Activated CD4-positive, alpha-beta T cell treated with anti-CD3 and anti-CD28 coated beads, Interleukin-2, amount 10 ng/mL, durations not matched to agents 24 days and 14 days (primary cell): ENCODE measurements at regions of chr3 and their contacts with region 1.

Region 1: GRCh38 chr3:4978204-4978965 is 852 bp upstream of the BHLHE40 start:
- DNase-seq: peak; percentile 97
- H3K4me3 Mint-ChIP-seq: peak overlapping the region; percentile 96
- H3K27ac Mint-ChIP-seq: peak overlapping the region; percentile 100
- H3K4me1 Mint-ChIP-seq: peaks cover 33% of the 10 kb centered on the region
- H3K27me3 Mint-ChIP-seq: no peaks in the 10 kb centered on the region

Region 2: DNA sequence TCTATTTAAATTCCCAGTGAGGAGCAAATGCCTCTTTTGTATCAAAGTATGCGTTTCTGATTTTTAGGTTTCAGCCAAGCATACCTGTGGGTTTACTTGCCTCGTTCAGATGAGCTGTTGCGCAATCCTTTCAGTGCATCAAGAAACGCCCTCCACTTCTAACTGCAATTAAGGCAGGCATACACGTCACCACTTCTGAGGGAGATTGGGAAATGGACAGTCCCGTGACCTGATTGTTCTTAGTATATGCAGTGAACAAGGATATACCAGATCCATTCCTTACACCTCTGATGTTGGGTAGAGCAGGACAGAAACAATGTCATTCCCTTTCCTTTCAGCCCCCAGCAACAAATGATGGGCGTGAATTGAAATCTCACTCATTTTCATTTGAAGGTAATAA is 266.2 kb before region 1 on chr3:
- intact Hi-C with region 1: loop called (anchors 1 kb)
- DNase-seq: no peak
- H3K4me3 Mint-ChIP-seq: no peak overlapping the region
- H3K27ac Mint-ChIP-seq: no peak overlapping the region
- H3K4me1 Mint-ChIP-seq: peaks cover 27% of the 10 kb centered on the region
- H3K27me3 Mint-ChIP-seq: no peaks in the 10 kb centered on the region

Region 3: GRCh38 chr3:4776980-4777581 is 201.3 kb before region 1 on chr3:
- intact Hi-C with region 1: loop called (anchors 1 kb)
- DNase-seq: peak; percentile 80
- H3K4me3 Mint-ChIP-seq: peak overlapping the region; percentile 60
- H3K27ac Mint-ChIP-seq: peak overlapping the region; percentile 97
- H3K4me1 Mint-ChIP-seq: peaks cover 59% of the 10 kb centered on the region
- H3K27me3 Mint-ChIP-seq: no peaks in the 10 kb centered on the region

Region 4: DNA sequence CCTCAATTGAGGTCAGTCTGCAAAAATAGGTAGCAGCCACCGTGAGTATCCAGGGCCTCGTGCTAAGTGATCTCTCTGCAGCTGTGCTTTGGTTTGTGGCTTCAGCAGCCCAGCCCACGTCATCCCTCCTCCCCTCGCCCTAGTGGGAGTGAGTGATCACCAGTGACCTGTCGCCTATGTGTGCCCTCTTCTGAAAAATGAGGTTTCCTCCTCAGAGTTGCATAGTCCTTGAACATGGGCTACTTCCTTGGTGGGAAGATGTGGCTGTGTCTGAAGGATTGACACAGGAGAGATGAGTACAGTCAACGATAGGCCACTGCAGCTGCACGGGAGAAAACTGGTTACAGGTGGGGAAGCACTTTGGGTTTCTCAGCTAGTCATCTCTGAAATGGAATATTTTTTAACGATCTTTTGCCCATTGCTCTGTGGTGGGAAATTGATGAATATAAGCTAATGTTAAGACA is 143.9 kb before region 1 on chr3:
- intact Hi-C with region 1: loop called (anchors 1 kb)
- DNase-seq: peak; percentile 94
- H3K4me3 Mint-ChIP-seq: peak overlapping the region; percentile 81
- H3K27ac Mint-ChIP-seq: peak overlapping the region; percentile 97
- H3K4me1 Mint-ChIP-seq: peaks cover 83% of the 10 kb centered on the region
- H3K27me3 Mint-ChIP-seq: no peaks in the 10 kb centered on the region

Region 5: GRCh38 chr3:4888913-4889846 is 89.2 kb before region 1 on chr3:
- intact Hi-C with region 1: loop called (anchors 1 kb)
- DNase-seq: peak; percentile 87
- H3K4me3 Mint-ChIP-seq: peak overlapping the region; percentile 49
- H3K27ac Mint-ChIP-seq: peak overlapping the region; percentile 89
- H3K4me1 Mint-ChIP-seq: peaks cover 44% of the 10 kb centered on the region
- H3K27me3 Mint-ChIP-seq: no peaks in the 10 kb centered on the region

Region 6: DNA sequence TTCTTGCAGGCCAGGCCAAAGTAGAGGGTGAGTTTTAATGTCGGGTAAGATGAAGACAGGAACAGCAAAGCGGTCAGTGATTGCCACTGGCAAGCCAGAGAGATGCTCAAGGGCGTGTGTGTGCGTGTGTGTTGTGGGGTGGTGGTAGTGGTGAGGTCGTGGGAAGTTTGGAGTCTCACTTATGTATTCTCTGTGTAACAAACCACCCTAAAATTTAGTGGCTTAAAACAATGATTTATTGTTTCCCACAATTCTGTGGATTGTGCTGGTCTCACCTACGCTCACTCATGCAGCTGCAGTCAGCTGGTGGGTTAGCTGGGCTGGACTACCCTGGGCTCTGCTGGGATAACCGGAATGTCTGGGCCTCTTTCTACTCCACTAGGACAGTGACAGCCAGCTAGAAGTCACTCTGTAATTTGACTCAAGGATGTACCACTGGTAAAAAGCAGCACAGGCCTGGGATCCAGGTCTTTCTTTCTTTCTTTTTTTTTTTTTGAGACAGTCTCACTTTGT is 50.1 kb before region 1 on chr3:
- intact Hi-C with region 1: loop called (anchors 1 kb)
- DNase-seq: peak; percentile 72
- H3K4me3 Mint-ChIP-seq: no peak overlapping the region
- H3K27ac Mint-ChIP-seq: peak overlapping the region; percentile 65
- H3K4me1 Mint-ChIP-seq: peaks cover 24% of the 10 kb centered on the region
- H3K27me3 Mint-ChIP-seq: no peaks in the 10 kb centered on the region

Region 7: DNA sequence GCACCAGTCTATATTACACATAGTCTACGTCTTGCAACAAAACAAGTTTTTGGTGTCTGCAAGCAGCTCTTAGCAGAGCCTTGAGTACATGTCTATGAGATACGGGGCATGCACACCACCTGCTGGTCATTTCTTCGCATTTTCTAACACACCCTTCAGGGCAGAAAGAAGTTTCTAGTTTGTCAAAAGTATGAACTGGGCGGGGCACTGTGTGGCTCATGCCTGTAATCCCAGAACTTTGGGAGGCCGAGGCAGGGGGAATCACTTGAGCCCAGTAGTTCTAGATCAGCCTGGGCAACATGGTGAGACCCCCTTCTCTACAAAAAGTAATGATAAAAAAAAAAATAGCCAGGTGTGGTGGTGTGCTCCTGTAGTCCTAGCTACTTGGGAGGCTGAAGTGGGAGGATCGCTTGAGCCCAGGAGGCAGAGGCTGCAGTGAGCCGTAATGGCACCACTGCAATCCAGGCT is 79.5 kb after region 1 on chr3:
- intact Hi-C with region 1: loop called (anchors 1 kb)
- DNase-seq: peak; percentile 93
- H3K4me3 Mint-ChIP-seq: peak overlapping the region; percentile 29
- H3K27ac Mint-ChIP-seq: no peak overlapping the region
- H3K4me1 Mint-ChIP-seq: peaks cover 36% of the 10 kb centered on the region
- H3K27me3 Mint-ChIP-seq: peaks cover 7% of the 10 kb centered on the region